AG04449 (cell line): ENCODE measurements at regions of chr22 and their contacts with region 1.

Region 1: GRCh38 chr22:42473484-42474193 is 41.4 kb upstream of the NFAM1 start:
- DNase-seq: no peak
- H3K4me3 ChIP-seq: no peak overlapping the region
- CTCF ChIP-seq: peak; percentile 62

Region 2: GRCh38 chr22:41966607-41967240 is 506.9 kb before region 1 on chr22:
- CTCF ChIA-PET with region 1: interaction called, 36 read pairs
- POLR2A ChIA-PET with region 1: no interaction called
- DNase-seq: peak; percentile 63
- H3K4me3 ChIP-seq: no peak overlapping the region
- CTCF ChIP-seq: no peak

Region 3: GRCh38 chr22:42462016-42462415 is 11.6 kb before region 1 on chr22:
- CTCF ChIA-PET with region 1: interaction called, 20 read pairs
- POLR2A ChIA-PET with region 1: no interaction called
- DNase-seq: no peak
- H3K4me3 ChIP-seq: no peak overlapping the region
- CTCF ChIP-seq: no peak

Region 4: GRCh38 chr22:42484506-42484905 is 10.9 kb after region 1 on chr22:
- CTCF ChIA-PET with region 1: interaction called, 13 read pairs
- POLR2A ChIA-PET with region 1: no interaction called
- DNase-seq: no peak
- H3K4me3 ChIP-seq: no peak overlapping the region
- CTCF ChIP-seq: no peak

Region 5: GRCh38 chr22:42528258-42528948 is 54.8 kb after region 1 on chr22:
- CTCF ChIA-PET with region 1: no interaction called
- POLR2A ChIA-PET with region 1: no interaction called
- DNase-seq: no peak
- H3K4me3 ChIP-seq: no peak overlapping the region
- CTCF ChIP-seq: no peak